Caki2 (cell line): ENCODE measurements at regions of chr2 and their contacts with region 1.

Region 1: GRCh38 chr2:11778923-11779757 is 32.7 kb downstream of the LPIN1 start:
- DNase-seq: peak; percentile 58

Region 2: GRCh38 chr2:11583840-11584524 is 195.2 kb before region 1 on chr2:
- in situ Hi-C with region 1: no loop called
- DNase-seq: peak; percentile 85

Region 3: GRCh38 chr2:11647834-11648600 is 131.1 kb before region 1 on chr2:
- in situ Hi-C with region 1: no loop called
- DNase-seq: no peak

Region 4: DNA sequence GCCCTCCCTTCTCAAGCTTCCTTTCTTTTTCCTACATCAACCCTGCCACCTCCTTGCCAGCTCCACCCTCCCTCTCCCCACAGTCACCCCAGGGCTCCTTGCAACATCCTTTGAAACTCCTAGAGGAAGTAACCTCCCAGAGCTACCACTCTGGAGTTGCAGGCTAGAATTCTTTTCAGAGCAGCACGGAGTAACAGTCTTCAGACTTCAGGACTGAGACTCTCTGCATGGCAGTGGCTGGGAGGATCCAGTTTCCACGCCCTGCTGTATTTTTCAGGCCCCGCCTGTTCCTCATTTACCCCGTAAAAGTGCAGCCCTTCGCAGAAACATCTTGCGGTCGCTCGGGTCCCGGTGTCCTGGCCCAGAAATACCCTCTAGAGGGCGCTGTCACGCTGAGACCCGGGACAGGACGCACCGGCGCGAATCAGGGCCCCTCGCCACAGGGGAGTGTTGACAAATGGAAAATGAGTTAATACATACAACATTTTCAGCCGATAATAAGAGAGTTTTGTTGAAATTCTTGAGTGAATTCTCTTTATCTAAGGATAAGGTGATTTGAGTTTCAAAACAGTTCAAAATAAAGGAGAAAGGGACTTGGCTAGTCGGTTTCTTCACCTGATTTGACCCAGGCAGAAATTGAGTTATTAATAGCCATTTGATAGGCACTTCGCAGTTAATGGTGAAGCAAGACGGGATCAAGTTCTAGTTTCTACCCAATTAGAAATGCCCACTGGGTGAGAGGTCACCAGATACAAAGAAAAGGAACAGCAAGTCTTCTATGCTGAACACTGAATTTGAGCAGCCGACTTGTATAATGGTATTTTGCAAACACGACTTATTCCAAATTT is 90.7 kb before region 1 on chr2:
- in situ Hi-C with region 1: loop called (anchors 25 kb)
- DNase-seq: peak; percentile 78

Region 5: DNA sequence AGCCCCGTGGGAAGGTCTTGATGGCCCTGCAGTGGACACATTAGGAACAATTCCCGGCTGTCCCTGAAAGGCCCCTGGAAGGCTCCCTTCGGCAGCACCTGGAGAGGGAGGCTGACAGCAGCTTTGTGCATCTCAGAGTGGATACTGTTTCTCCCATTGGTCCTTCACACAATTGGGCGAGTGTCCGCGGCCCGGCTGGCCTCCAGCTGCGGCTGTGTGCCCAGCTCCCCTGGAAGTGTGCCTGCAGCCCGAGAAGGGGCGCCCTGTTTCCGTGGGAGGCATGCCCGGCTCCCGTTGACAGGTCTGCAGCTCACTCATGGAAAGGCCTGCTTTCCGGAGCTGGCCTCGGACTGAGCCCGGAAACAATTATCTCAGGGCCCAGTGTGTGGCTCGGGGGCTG is 70.9 kb after region 1 on chr2:
- in situ Hi-C with region 1: no loop called
- DNase-seq: no peak

Region 6: GRCh38 chr2:11904029-11904428 is 124.9 kb after region 1 on chr2:
- in situ Hi-C with region 1: no loop called
- DNase-seq: no peak